ENCODE measurements at regions of chr12 and their contacts with region 1.

Region 1: DNA sequence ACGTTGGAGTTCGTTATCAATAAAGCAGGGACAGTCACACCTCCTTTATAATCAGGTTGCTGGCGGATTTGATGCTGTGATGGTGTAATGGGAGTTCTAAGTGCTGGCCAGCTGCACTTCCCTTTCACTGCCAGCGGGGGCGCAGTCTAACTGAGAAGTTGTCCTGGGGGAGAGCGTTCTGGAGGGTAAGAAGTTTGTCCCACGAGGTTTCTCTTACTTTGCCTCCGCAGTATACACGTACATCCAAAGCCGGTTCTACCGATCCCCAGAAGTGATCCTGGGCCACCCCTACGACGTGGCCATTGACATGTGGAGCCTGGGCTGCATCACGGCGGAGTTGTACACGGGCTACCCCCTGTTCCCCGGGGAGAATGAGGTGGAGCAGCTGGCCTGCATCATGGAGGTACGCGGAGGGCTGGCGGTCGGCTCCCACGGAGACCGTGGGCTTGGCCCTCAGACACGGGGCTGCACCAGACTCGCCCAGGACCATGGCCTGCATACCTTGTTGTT is 42.7 kb downstream of the DYRK4 start:
- DNase-seq: peak; percentile 21 to 79
- H3K4me3 ChIP-seq: peak overlapping the region; percentile 68 to 96 (median 86)
- H3K27ac ChIP-seq: peak overlapping the region; percentile 27; the same call in 1 of the 2 replicates
- H3K4me1 ChIP-seq: no peaks in the 10 kb centered on the region
- H3K27me3 ChIP-seq: no peaks in the 10 kb centered on the region
- CTCF ChIP-seq: peak; percentile 83 to 98 (median 91)
- EP300 ChIP-seq: 0 out of 3 replicates have a peak, but pooled peaks of 1 of the 2 experiments have one; percentile 8
- POLR2A ChIP-seq: peak in 1 of 2 experiments; percentile 55; a peak in 2 of 3 replicates
- RAD21 ChIP-seq: peak; percentile 68 to 78

Region 2: DNA sequence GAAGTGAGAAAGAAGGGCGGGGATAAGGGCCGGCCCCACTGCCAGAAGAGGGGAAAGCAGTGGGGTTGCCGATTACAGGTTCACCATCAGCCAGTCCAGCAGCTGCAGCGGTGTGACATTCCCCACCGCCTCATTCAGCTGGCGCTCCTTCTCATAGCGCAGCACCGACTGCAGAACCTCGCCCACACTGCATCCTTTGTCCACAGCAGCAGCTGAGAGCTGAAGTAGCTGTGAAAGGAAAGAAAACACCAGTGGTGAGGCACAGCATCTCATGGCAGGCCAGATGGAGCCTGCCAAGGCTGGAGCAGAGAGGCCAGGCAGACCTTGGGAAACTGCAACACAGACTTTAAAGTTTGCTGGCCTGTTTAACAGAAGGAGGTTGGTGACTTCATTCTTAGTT is 10.9 kb after region 1 on chr12:
- CTCF ChIA-PET with region 1: interaction called, 23 read pairs
- POLR2A ChIA-PET with region 1: no interaction called
- DNase-seq: no peak
- H3K4me3 ChIP-seq: no peak overlapping the region
- H3K27ac ChIP-seq: no peak overlapping the region
- H3K4me1 ChIP-seq: no peaks in the 10 kb centered on the region
- H3K27me3 ChIP-seq: no peaks in the 10 kb centered on the region
- CTCF ChIP-seq: no peak
- EP300 ChIP-seq: no peak
- POLR2A ChIP-seq: no peak
- RAD21 ChIP-seq: no peak

Region 3: DNA sequence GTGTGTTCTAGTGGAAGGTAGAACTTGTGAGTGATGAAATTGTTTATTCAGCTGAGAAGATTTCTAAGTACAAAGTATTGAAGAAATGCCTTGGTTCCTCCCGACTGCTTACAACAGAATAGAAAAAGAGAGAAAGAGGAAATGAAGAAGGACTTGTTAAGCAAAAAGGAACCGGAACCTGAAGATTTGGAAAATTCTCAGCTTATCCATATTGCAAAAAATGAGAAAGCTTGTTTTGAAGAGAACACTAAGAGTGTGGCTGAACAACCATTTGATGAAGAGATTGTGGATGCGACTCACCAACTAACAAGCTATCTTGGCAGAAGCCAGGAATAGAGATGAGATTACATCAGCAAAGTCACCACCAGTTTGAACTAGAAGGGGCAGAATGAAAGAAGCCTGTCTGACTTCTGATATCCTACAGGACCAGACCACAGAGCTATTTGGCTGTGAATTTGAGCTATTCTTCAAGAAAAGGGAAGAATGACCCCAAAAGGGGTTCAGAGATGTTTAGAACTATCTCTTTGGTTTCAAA is 59.3 kb after region 1 on chr12:
- CTCF ChIA-PET with region 1: no interaction called
- POLR2A ChIA-PET with region 1: no interaction called
- DNase-seq: no peak
- H3K4me3 ChIP-seq: no peak overlapping the region
- H3K27ac ChIP-seq: no peak overlapping the region
- H3K4me1 ChIP-seq: no peaks in the 10 kb centered on the region
- H3K27me3 ChIP-seq: no peaks in the 10 kb centered on the region
- CTCF ChIP-seq: no peak
- EP300 ChIP-seq: no peak
- POLR2A ChIP-seq: no peak
- RAD21 ChIP-seq: no peak

Region 4: DNA sequence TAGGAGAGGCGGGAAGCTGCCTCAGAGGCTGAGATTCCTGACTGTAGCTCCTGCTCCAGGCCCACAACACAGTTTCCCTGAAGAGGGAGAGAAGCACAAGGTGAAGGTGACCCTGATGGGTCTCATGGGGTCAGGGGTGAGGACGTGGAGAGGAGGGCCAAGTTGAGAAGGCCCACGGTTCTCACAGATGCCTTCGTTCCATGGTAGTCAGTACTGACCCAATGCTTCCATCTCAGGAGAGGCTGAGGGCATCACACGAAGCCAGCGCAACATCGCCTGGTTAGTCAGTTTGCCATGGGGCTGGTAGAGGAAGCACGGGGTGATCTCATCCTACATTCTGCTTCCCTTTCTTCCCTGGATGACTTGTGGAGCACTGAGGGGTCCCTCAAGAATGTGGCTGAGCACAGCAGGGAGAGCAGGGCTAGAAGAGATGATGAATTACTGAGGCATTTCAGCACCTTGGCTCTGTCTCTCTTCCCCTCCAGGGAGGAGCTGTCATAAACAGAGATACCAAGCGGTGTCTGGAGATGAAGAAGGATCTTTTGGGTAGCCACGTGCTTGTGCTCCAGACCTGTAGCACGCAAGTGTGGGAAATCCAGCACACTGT is 167.3 kb after region 1 on chr12:
- CTCF ChIA-PET with region 1: no interaction called
- POLR2A ChIA-PET with region 1: no interaction called
- DNase-seq: no peak
- H3K4me3 ChIP-seq: no peak overlapping the region
- H3K27ac ChIP-seq: no peak overlapping the region
- H3K4me1 ChIP-seq: no peaks in the 10 kb centered on the region
- H3K27me3 ChIP-seq: no peaks in the 10 kb centered on the region
- CTCF ChIP-seq: no peak
- EP300 ChIP-seq: no peak
- POLR2A ChIP-seq: no peak
- RAD21 ChIP-seq: no peak

Measured in H1 (cell line).